BJ (cell line): ENCODE measurements at regions of chr3 and their contacts with region 1.

Region 1: DNA sequence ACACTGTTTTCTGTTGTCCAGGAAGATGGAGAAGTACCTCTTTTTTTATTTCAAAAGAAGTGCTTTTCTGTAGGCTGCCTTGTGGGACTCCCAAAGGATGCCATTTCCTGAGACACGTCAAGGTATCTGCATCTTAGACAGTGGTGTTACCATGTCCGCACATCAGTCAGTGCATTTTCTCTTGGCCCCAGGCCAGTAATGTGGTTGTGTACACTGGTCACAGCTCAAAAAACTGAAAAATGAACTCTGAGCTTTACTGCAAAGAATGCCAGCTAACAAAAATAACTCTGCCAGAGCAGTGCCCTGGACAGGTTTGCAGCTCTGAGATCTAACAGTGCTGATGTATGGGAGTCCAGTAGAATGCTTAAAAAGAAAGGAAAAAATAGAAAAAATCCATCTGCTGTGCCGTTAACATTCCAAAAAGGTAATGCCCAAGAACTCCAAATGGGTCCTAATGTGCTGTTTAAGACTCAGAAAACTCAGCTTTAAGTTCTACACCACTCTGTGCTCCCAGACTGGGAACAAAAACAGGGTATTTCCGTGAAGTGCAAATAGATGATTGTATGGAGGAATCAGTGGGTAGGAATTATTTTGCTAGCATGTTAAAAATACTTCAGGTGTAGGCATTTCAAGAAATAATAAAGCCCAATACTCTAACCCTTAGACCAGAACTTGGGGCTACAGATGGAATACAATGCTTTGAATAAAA is 315.9 kb downstream of the FEZF2 start:
- DNase-seq: no peak
- H3K4me3 ChIP-seq: no peak overlapping the region
- H3K27me3 ChIP-seq: no peaks in the 10 kb centered on the region
- CTCF ChIP-seq: no peak

Region 2: DNA sequence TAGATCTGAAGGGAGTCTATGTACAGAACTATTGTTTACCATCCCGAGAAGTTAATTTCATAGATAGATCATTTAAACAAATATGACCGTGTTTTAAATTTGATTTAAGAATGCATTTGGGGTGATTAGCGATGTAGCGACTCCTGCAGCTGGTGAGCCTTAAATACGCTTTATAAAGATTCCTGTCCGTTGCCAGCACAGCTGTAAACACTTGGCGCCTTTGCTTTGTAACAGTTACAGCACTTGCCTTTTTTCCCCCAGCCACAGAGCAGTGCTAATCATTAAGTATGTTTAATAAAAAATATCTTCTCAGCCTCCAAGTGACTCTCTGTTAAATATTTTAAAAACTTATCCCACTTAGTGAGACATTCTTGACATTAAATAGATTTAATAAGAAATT is 17.9 kb before region 1 on chr3:
- CTCF ChIA-PET with region 1: no interaction called
- POLR2A ChIA-PET with region 1: interaction called, 11 read pairs
- DNase-seq: no peak
- H3K4me3 ChIP-seq: no peak overlapping the region
- H3K27me3 ChIP-seq: no peaks in the 10 kb centered on the region
- CTCF ChIP-seq: no peak